Endothelial cell of umbilical vein (primary cell): ENCODE measurements at regions of chr18 and their contacts with region 1.

Region 1: GRCh38 chr18:62131301-62131909 is 55.5 kb downstream of the PIGN start:
- DNase-seq: peak; percentile 72
- H3K4me3 ChIP-seq: no peak overlapping the region
- H3K27ac ChIP-seq: no peak overlapping the region
- H3K4me1 ChIP-seq: peaks cover 16% of the 10 kb centered on the region
- H3K27me3 ChIP-seq: no peaks in the 10 kb centered on the region
- CTCF ChIP-seq: peak; percentile 70 to 79
- POLR2A ChIP-seq: no peak

Region 2: GRCh38 chr18:61322265-61322873 is 809.0 kb before region 1 on chr18:
- CTCF ChIA-PET with region 1: interaction called, 22 read pairs
- POLR2A ChIA-PET with region 1: no interaction called
- dilution Hi-C with region 1: no loop called
- intact Hi-C with region 1: loop called (anchors 1 kb)
- DNase-seq: peak; percentile 53
- H3K4me3 ChIP-seq: no peak overlapping the region
- H3K27ac ChIP-seq: no peak overlapping the region
- H3K4me1 ChIP-seq: no peaks in the 10 kb centered on the region
- H3K27me3 ChIP-seq: no peaks in the 10 kb centered on the region
- CTCF ChIP-seq: peak; percentile 82 to 89
- POLR2A ChIP-seq: no peak

Region 3: GRCh38 chr18:61551586-61551985 is 579.8 kb before region 1 on chr18:
- CTCF ChIA-PET with region 1: interaction called, 51 read pairs
- POLR2A ChIA-PET with region 1: no interaction called
- dilution Hi-C with region 1: no loop called
- intact Hi-C with region 1: loop called (anchors 1 kb)
- DNase-seq: peak; percentile 88
- H3K4me3 ChIP-seq: no peak overlapping the region
- H3K27ac ChIP-seq: no peak overlapping the region
- H3K4me1 ChIP-seq: no peaks in the 10 kb centered on the region
- H3K27me3 ChIP-seq: no peaks in the 10 kb centered on the region
- CTCF ChIP-seq: peak; percentile 72 to 79
- POLR2A ChIP-seq: no peak

Region 4: GRCh38 chr18:61635901-61636528 is 495.4 kb before region 1 on chr18:
- CTCF ChIA-PET with region 1: interaction called, 33 read pairs
- POLR2A ChIA-PET with region 1: no interaction called
- dilution Hi-C with region 1: no loop called
- intact Hi-C with region 1: loop called (anchors 1 kb)
- DNase-seq: peak; percentile 76
- H3K4me3 ChIP-seq: no peak overlapping the region
- H3K27ac ChIP-seq: no peak overlapping the region
- H3K4me1 ChIP-seq: peaks cover 4% of the 10 kb centered on the region
- H3K27me3 ChIP-seq: no peaks in the 10 kb centered on the region
- CTCF ChIP-seq: peak; percentile 82 to 88
- POLR2A ChIP-seq: no peak

Region 5: GRCh38 chr18:61893971-61894750 is 237.2 kb before region 1 on chr18:
- CTCF ChIA-PET with region 1: interaction called, 48 read pairs
- POLR2A ChIA-PET with region 1: no interaction called
- dilution Hi-C with region 1: no loop called
- intact Hi-C with region 1: loop called (anchors 1 kb)
- DNase-seq: peak; percentile 82
- H3K4me3 ChIP-seq: peak overlapping the region; percentile 83 to 98 (median 87)
- H3K27ac ChIP-seq: peak overlapping the region; percentile 67
- H3K4me1 ChIP-seq: peaks cover 21% of the 10 kb centered on the region
- H3K27me3 ChIP-seq: no peaks in the 10 kb centered on the region
- CTCF ChIP-seq: peak in 1 of 2 donors; percentile 44
- POLR2A ChIP-seq: peak; percentile 82

Region 6: GRCh38 chr18:61955644-61956043 is 175.8 kb before region 1 on chr18:
- CTCF ChIA-PET with region 1: interaction called, 3 read pairs
- POLR2A ChIA-PET with region 1: no interaction called
- dilution Hi-C with region 1: no loop called
- intact Hi-C with region 1: loop called (anchors 1 kb)
- DNase-seq: peak; percentile 56
- H3K4me3 ChIP-seq: no peak overlapping the region
- H3K27ac ChIP-seq: no peak overlapping the region
- H3K4me1 ChIP-seq: peaks cover 16% of the 10 kb centered on the region
- H3K27me3 ChIP-seq: no peaks in the 10 kb centered on the region
- CTCF ChIP-seq: no peak
- POLR2A ChIP-seq: no peak

Region 7: GRCh38 chr18:62026586-62026985 is 104.8 kb before region 1 on chr18:
- CTCF ChIA-PET with region 1: no interaction called
- POLR2A ChIA-PET with region 1: no interaction called
- dilution Hi-C with region 1: no loop called
- intact Hi-C with region 1: no loop called
- DNase-seq: peak; percentile 84
- H3K4me3 ChIP-seq: no peak overlapping the region
- H3K27ac ChIP-seq: peak overlapping the region; percentile 34
- H3K4me1 ChIP-seq: peaks cover 2% of the 10 kb centered on the region
- H3K27me3 ChIP-seq: no peaks in the 10 kb centered on the region
- CTCF ChIP-seq: no peak
- POLR2A ChIP-seq: no peak

Region 8: GRCh38 chr18:62200121-62200914 is 68.9 kb after region 1 on chr18:
- CTCF ChIA-PET with region 1: no interaction called
- POLR2A ChIA-PET with region 1: no interaction called
- dilution Hi-C with region 1: no loop called
- intact Hi-C with region 1: no loop called
- DNase-seq: peak; percentile 10
- H3K4me3 ChIP-seq: no peak overlapping the region
- H3K27ac ChIP-seq: no peak overlapping the region
- H3K4me1 ChIP-seq: peaks cover 4% of the 10 kb centered on the region
- H3K27me3 ChIP-seq: no peaks in the 10 kb centered on the region
- CTCF ChIP-seq: no peak
- POLR2A ChIP-seq: no peak